Endothelial cell of umbilical vein (primary cell): ENCODE measurements at regions of chr6 and their contacts with region 1.

Region 1: DNA sequence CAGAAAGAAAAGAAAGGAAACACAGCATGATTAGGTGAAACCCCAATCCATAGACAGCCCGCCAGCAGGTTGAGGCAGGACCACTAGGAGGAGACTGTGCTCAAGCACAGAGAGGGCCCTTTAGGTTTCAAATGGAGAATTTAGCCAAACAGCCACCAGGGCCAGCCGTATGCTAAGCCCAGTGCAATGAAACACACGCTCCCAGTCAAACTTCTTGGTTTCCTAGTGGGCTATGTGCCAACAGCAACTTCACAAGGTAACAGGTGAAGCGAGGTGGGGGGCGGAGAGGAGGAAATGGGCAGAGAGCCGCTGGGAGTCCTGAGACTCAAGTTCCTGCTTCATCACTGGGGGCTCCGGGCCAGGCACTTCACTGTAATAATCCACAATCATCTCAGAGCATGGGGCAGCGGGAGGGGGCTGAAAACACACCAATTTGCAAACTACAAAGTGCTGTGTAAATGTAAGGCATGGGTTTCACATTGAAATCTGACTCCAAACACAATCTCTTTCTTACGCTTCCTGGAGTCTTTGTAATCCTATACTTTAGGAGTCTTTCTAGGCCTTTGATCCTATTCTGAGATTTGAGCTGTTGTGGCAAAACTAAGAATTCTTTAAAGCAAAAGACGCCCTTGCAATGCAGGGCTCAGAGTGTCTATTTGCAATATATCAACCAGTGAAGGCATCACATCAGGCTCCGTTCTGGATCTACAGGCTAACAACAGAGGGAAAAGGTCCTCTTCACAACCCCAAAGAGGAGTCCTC is 117.3 kb downstream of the OPRM1 start:
- DNase-seq: peak; percentile 46
- H3K4me3 ChIP-seq: no peak overlapping the region
- H3K27ac ChIP-seq: no peak overlapping the region
- H3K4me1 ChIP-seq: no peaks in the 10 kb centered on the region
- H3K27me3 ChIP-seq: no peaks in the 10 kb centered on the region
- CTCF ChIP-seq: peak; percentile 68 to 81
- POLR2A ChIP-seq: no peak

Region 2: GRCh38 chr6:154127657-154128056 is 28.7 kb before region 1 on chr6:
- CTCF ChIA-PET with region 1: no interaction called
- POLR2A ChIA-PET with region 1: no interaction called
- dilution Hi-C with region 1: no loop called
- intact Hi-C with region 1: no loop called
- DNase-seq: peak; percentile 4
- H3K4me3 ChIP-seq: no peak overlapping the region
- H3K27ac ChIP-seq: no peak overlapping the region
- H3K4me1 ChIP-seq: no peaks in the 10 kb centered on the region
- H3K27me3 ChIP-seq: no peaks in the 10 kb centered on the region
- CTCF ChIP-seq: no peak
- POLR2A ChIP-seq: no peak

Region 3: DNA sequence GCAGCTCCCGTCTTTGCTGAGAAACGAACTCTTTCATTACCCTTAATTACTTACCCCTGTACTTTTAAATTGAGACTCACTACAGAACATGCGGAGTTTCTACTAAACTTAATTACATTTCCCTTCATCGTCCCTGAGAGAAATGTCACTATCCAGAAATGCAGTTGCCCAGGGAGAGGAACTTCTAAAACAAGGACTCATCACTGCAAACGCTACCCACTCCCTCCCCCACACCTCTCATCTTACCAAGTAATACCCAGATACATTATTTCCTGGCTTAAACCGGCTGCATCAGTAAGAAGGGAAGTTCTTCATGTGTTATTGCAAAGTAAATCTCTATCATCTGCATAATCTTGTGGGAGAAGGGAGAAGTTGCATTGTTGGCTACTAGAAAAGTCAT is 62.0 kb after region 1 on chr6:
- CTCF ChIA-PET with region 1: no interaction called
- POLR2A ChIA-PET with region 1: no interaction called
- dilution Hi-C with region 1: no loop called
- intact Hi-C with region 1: no loop called
- DNase-seq: no peak
- H3K4me3 ChIP-seq: no peak overlapping the region
- H3K27ac ChIP-seq: no peak overlapping the region
- H3K4me1 ChIP-seq: no peaks in the 10 kb centered on the region
- H3K27me3 ChIP-seq: peaks cover 0 to 2% of the 10 kb centered on the region in 2 experiments
- CTCF ChIP-seq: no peak
- POLR2A ChIP-seq: no peak

Region 4: GRCh38 chr6:154370545-154370944 is 214.2 kb after region 1 on chr6:
- CTCF ChIA-PET with region 1: interaction called, 28 read pairs
- POLR2A ChIA-PET with region 1: no interaction called
- dilution Hi-C with region 1: no loop called
- intact Hi-C with region 1: loop called (anchors 1 kb)
- DNase-seq: peak; percentile 59
- H3K4me3 ChIP-seq: no peak overlapping the region
- H3K27ac ChIP-seq: no peak overlapping the region
- H3K4me1 ChIP-seq: peaks cover 9% of the 10 kb centered on the region
- H3K27me3 ChIP-seq: no peaks in the 10 kb centered on the region
- CTCF ChIP-seq: peak; percentile 8 to 36
- POLR2A ChIP-seq: no peak

Region 5: DNA sequence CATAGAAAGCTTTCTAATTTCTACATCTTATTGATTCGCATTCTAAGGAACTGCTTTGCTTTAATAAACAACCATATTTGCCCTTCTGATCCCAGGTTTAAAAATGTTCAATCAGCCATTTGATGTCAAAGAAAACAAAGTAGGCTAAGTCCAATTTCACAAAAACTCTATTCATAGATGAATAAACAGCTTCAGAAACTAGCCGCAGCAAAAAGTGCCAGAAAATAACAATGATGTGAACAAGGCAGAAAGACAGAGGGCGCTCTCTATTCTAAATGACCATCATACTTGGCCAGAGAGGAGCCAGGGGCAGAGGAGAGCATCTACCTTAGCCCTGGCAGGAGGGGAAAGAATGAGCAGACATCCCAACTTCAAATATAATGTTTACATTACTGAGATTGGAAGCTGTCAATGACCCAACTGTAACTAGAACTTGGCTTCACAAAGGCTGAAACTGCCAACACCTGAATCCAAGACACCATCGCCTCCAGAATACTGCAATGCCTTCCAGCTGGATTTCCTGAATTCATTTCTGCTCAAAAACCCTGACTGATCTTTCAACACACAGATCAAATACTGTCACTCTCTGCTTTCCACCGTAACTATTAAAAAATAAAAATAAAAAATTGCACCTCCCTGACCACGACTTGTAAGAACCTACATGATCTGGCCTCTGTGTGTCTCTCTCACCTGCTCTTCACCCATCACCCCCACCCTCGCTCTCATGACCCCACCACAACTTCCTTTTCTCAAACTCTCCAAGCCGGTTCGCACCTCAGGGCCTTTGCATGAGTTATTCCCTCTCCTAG is 344.7 kb after region 1 on chr6:
- CTCF ChIA-PET with region 1: interaction called, 8 read pairs
- POLR2A ChIA-PET with region 1: no interaction called
- dilution Hi-C with region 1: no loop called
- intact Hi-C with region 1: loop called (anchors 2 kb)
- DNase-seq: peak; percentile 67
- H3K4me3 ChIP-seq: no peak overlapping the region
- H3K27ac ChIP-seq: no peak overlapping the region
- H3K4me1 ChIP-seq: peaks cover 19% of the 10 kb centered on the region
- H3K27me3 ChIP-seq: no peaks in the 10 kb centered on the region
- CTCF ChIP-seq: peak; percentile 44 to 47
- POLR2A ChIP-seq: no peak

Region 6: GRCh38 chr6:154733012-154733625 is 576.8 kb after region 1 on chr6 and contains the start of gene SCAF8:
- CTCF ChIA-PET with region 1: no interaction called
- POLR2A ChIA-PET with region 1: no interaction called
- dilution Hi-C with region 1: no loop called
- intact Hi-C with region 1: loop called (anchors 2 kb)
- DNase-seq: peak; percentile 81
- H3K4me3 ChIP-seq: peak within 1 kb of the TSS; percentile 74 to 96 (median 89)
- H3K27ac ChIP-seq: peak within 1 kb of the TSS; percentile 90
- H3K4me1 ChIP-seq: peaks cover 20% of the 10 kb centered on the region
- H3K27me3 ChIP-seq: no peaks in the 10 kb centered on the region
- CTCF ChIP-seq: peak; percentile 83 to 85
- POLR2A ChIP-seq: peak; percentile 84
- total RNA-seq, gene SCAF8: 37.4 and 37.8 TPM in 2 replicates

Region 7: GRCh38 chr6:154928325-154928922 is 772.1 kb after region 1 on chr6:
- CTCF ChIA-PET with region 1: no interaction called
- POLR2A ChIA-PET with region 1: no interaction called
- dilution Hi-C with region 1: no loop called
- intact Hi-C with region 1: loop called (anchors 5 kb)
- DNase-seq: peak; percentile 76
- H3K4me3 ChIP-seq: no peak overlapping the region
- H3K27ac ChIP-seq: no peak overlapping the region
- H3K4me1 ChIP-seq: peaks cover 13% of the 10 kb centered on the region
- H3K27me3 ChIP-seq: no peaks in the 10 kb centered on the region
- CTCF ChIP-seq: peak; percentile 65 to 73
- POLR2A ChIP-seq: no peak